ENCODE measurements at regions of chr5 and their contacts with region 1.

Region 1: GRCh38 chr5:71601222-71602041 is 14.3 kb downstream of the MCCC2 start:
- DNase-seq: peak; percentile 90
- H3K4me3 Mint-ChIP-seq: peak overlapping the region; percentile 1
- H3K27ac Mint-ChIP-seq: peak overlapping the region; percentile 96
- H3K4me1 Mint-ChIP-seq: peaks cover 33% of the 10 kb centered on the region
- H3K27me3 Mint-ChIP-seq: no peaks in the 10 kb centered on the region

Region 2: DNA sequence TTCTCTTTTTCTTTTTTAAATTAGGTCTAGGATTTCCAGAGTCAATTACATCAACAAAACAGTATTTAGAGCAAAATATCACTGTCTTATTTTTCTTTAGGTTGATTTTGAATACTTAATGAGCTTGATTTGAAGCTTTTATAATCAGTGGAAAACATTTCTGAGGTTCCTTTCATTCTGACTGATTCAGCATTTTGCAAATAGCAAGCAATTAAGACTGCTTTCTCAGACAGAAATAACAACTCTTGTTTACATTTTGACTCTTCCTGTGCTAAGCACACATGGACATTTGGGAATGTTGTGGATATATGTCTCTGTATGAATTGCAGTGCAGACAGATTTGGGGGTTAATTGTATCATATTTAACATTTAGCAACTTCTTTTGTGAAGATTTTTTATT is 36.5 kb before region 1 on chr5:
- CTCF ChIA-PET with region 1: interaction called, 10 read pairs
- POLR2A ChIA-PET with region 1: no interaction called
- intact Hi-C with region 1: no loop called
- DNase-seq: no peak
- H3K4me3 Mint-ChIP-seq: no peak overlapping the region
- H3K27ac Mint-ChIP-seq: no peak overlapping the region
- H3K4me1 Mint-ChIP-seq: no peaks in the 10 kb centered on the region
- H3K27me3 Mint-ChIP-seq: no peaks in the 10 kb centered on the region

Region 3: GRCh38 chr5:71633255-71634155 is 32.1 kb after region 1 on chr5:
- CTCF ChIA-PET with region 1: no interaction called
- POLR2A ChIA-PET with region 1: interaction called, 4 read pairs
- intact Hi-C with region 1: loop called (anchors 1 kb)
- DNase-seq: no peak
- H3K4me3 Mint-ChIP-seq: no peak overlapping the region
- H3K27ac Mint-ChIP-seq: peak overlapping the region; percentile 23
- H3K4me1 Mint-ChIP-seq: no peaks in the 10 kb centered on the region
- H3K27me3 Mint-ChIP-seq: no peaks in the 10 kb centered on the region

Region 4: DNA sequence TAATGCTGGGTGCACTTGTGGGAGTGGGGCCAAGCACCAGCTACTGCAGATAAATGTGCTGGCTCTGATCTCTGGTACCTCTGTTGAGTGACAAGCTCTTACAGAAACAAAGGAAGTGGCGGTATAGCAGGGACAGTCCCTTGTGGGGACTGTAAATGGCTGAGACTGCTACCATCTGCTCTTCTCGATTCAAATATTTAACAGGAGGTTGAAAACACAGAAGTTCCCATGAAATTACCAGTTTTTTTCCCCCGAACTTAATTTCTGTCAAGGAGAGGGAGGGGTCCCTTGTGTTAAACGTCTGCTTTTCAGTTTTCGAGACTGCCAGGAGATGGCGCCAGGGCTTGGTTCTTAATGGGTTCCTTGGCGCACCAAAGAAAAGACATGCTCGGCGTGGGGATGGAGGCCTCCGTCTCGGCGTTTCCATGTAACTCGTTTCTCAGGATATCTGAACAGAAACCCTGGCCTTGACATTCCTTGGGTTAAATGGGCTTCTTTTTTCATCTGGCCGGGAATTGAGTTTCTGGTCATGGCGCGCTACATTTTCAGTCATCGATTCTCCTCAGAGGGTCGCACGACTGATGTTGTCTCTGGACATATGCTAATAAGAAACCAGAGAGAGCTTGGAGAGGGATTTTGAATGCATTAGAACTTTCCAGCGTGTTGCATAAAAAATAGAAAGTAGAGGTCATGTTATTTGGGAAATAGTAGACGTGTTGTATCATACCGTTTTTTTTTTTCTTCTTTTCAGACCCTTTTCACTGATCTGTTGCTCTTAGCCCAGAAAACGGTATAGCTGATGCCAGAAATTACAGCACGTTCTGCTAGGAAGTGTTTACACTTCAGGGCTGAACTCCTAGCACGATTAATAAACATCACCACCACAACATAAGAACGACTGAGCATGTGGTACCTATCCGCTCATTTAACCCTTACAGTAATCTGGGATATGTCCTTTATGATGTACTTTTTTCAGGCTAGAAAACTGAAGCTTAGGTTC is 181.6 kb after region 1 on chr5:
- CTCF ChIA-PET with region 1: no interaction called
- POLR2A ChIA-PET with region 1: no interaction called
- intact Hi-C with region 1: loop called (anchors 1 kb)
- DNase-seq: peak; percentile 85
- H3K4me3 Mint-ChIP-seq: peak overlapping the region; percentile 48
- H3K27ac Mint-ChIP-seq: peak overlapping the region; percentile 43
- H3K4me1 Mint-ChIP-seq: peaks cover 24% of the 10 kb centered on the region
- H3K27me3 Mint-ChIP-seq: peaks cover 4% of the 10 kb centered on the region

Region 5: DNA sequence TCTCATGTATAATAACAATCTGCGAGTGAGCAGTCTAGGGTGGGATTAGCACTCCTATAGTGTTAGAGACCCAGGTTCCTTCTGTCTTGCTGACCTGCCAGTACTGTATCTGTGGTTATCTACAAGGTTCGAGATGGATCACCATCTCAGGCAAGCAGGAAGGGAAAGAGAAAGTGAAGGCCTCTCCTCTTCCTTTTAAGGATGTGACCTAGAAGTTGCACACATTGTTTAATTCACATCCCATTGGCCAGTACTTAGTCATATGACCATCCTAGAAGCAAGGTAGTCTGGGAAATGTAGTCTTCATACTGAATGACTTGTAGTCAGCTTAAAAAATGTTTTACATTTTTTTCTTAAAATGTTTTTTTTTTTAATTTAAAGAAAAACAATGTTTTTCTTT is 286.2 kb after region 1 on chr5:
- CTCF ChIA-PET with region 1: no interaction called
- POLR2A ChIA-PET with region 1: no interaction called
- intact Hi-C with region 1: no loop called
- DNase-seq: no peak
- H3K4me3 Mint-ChIP-seq: peak overlapping the region; percentile 24
- H3K27ac Mint-ChIP-seq: no peak overlapping the region
- H3K4me1 Mint-ChIP-seq: no peaks in the 10 kb centered on the region
- H3K27me3 Mint-ChIP-seq: peaks cover 20% of the 10 kb centered on the region

Region 6: GRCh38 chr5:72307968-72308852 is 706.8 kb after region 1 on chr5:
- CTCF ChIA-PET with region 1: interaction called, 3 read pairs
- POLR2A ChIA-PET with region 1: no interaction called
- intact Hi-C with region 1: loop called (anchors 10 kb)
- DNase-seq: peak; percentile 97
- H3K4me3 Mint-ChIP-seq: peak overlapping the region; percentile 89
- H3K27ac Mint-ChIP-seq: peak overlapping the region; percentile 87
- H3K4me1 Mint-ChIP-seq: peaks cover 23% of the 10 kb centered on the region
- H3K27me3 Mint-ChIP-seq: no peaks in the 10 kb centered on the region

Measured in activated CD4-positive, alpha-beta memory T cell treated with anti-CD3 and anti-CD28 coated beads for 36 hours (primary cell).